OCI-LY7 (cell line): ENCODE measurements at regions of chr9 and their contacts with region 1.

Region 1: GRCh38 chr9:131739980-131740648 is at the start of gene RAPGEF1:
- DNase-seq: peak; percentile 84
- H3K4me3 ChIP-seq: peak within 1 kb of the TSS; percentile 81
- H3K27ac ChIP-seq: peak within 1 kb of the TSS; percentile 100
- H3K4me1 ChIP-seq: peaks cover 70% of the 10 kb centered on the region
- CTCF ChIP-seq: peak; percentile 82
- total RNA-seq, gene RAPGEF1: 114 and 118 TPM in 2 replicates

Region 2: GRCh38 chr9:131277910-131278701 is 462.0 kb before region 1 on chr9:
- CTCF ChIA-PET with region 1: no interaction called
- POLR2A ChIA-PET with region 1: no interaction called
- intact Hi-C with region 1: loop called (anchors 5 kb)
- DNase-seq: peak; percentile 86
- H3K4me3 ChIP-seq: peak overlapping the region; percentile 90
- H3K27ac ChIP-seq: peak overlapping the region; percentile 54
- H3K4me1 ChIP-seq: peaks cover 17% of the 10 kb centered on the region
- CTCF ChIP-seq: no peak

Region 3: DNA sequence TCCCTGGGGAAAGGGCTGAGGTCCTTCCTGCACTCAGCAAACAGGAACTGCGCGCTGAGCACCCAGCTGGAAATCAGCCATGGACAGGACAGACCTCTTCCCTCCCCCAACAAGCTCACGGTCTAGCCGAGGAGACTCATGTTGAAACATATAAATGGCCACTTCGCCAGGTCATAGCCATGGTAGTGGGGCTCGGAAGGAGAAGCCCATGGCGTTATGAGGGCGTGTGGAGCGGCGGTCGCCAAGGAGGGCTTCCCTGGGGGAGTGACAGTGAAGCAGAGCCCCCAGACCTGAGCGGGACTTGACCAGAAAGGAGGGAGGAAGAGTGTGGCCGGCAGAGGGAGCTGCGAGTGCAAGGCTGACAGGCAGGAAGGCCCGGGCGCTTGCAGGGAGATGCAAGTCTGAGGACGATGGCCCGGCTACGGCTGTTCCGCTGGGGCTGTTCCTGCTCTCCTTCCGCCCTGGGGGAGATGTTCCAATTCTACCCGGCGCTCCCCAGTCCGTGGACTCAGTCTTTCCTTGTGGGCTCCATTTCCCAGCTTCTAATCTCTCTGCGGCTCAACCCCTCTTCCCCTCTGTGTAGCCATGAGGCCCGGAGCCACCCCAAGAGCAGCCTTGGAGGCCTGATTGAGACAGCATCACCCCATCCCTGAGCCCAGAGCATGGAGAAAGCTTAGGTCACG is 390.1 kb before region 1 on chr9:
- CTCF ChIA-PET with region 1: no interaction called
- POLR2A ChIA-PET with region 1: no interaction called
- intact Hi-C with region 1: loop called (anchors 2 kb)
- DNase-seq: peak; percentile 87
- H3K4me3 ChIP-seq: no peak overlapping the region
- H3K27ac ChIP-seq: no peak overlapping the region
- H3K4me1 ChIP-seq: peaks cover 8% of the 10 kb centered on the region
- CTCF ChIP-seq: peak; percentile 85

Region 4: DNA sequence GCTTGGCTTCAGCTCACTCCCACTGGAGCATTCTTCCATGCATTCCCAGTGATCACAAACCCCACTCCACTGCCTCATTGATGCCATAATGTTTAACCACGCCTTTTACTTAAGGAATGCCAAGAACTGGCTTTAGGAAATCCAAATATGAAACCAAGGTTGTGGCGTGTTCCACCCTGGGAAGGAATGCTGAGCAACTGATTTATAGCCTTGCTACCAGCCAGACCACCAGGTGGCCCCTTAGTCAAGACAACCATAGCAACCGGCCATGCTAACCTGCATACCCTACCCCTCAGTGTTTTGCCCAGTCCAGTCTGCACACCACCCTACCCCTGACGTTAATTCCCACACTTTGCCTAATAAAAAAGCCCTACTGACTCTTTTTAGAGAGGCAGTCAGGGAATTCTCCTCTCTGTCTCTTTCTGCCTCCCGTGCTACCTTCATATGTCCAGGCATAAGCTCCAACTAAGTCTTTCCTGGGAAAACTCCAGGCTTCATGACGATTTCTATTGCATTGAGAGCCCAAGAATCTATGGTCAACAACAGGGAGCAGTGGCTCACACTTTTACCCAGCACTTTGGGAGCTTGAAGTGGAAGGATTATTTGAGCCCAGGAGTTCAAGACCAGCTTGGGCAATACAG is 373.2 kb before region 1 on chr9:
- CTCF ChIA-PET with region 1: no interaction called
- POLR2A ChIA-PET with region 1: no interaction called
- intact Hi-C with region 1: loop called (anchors 5 kb)
- DNase-seq: peak; percentile 68
- H3K4me3 ChIP-seq: no peak overlapping the region
- H3K27ac ChIP-seq: no peak overlapping the region
- H3K4me1 ChIP-seq: peaks cover 3% of the 10 kb centered on the region
- CTCF ChIP-seq: peak; percentile 77

Region 5: GRCh38 chr9:131590908-131591844 is 148.9 kb before region 1 on chr9:
- CTCF ChIA-PET with region 1: no interaction called
- POLR2A ChIA-PET with region 1: no interaction called
- intact Hi-C with region 1: loop called (anchors 2 kb)
- DNase-seq: peak; percentile 81
- H3K4me3 ChIP-seq: no peak overlapping the region
- H3K27ac ChIP-seq: no peak overlapping the region
- H3K4me1 ChIP-seq: no peaks in the 10 kb centered on the region
- CTCF ChIP-seq: peak; percentile 82

Region 6: DNA sequence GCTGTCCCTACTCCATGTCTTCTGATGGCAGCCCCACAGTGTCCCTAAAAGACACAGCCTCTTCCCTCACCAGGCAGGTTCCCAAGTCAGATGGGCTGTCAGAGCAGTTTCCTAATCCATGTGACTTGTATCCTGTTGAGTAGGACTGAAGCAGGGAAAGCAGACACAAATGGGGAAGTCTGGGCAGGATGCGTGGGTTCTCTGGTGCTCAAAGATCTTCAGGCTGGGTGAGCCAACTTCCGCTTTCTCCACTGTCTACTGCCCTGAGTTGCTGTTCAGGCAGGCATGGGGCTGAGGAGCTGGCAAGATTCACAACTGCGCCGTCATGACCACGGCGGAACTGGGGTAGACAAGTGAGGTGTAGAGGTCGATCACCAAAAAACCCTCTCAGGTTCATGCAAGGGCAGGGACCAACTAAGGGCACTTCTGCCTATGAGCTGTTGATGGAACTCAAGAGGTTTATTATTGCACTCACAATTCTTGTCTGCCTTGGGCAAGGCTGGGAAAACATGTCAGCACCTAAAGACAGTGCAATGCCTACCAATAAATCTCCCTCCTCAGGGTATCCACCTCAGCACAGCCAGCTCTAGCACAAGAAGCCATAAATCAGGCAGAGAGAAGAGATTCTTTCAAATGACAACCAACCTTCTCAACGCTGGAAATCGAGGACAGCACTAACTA is 83.6 kb before region 1 on chr9:
- CTCF ChIA-PET with region 1: interaction called, 3 read pairs
- POLR2A ChIA-PET with region 1: interaction called, 7 read pairs
- intact Hi-C with region 1: loop called (anchors 1 kb)
- DNase-seq: peak; percentile 93
- H3K4me3 ChIP-seq: peak overlapping the region; percentile 51
- H3K27ac ChIP-seq: peak overlapping the region; percentile 95
- H3K4me1 ChIP-seq: peaks cover 100% of the 10 kb centered on the region
- CTCF ChIP-seq: no peak

Region 7: GRCh38 chr9:131727184-131727759 is 12.8 kb before region 1 on chr9:
- CTCF ChIA-PET with region 1: interaction called, 7 read pairs
- POLR2A ChIA-PET with region 1: interaction called, 20 read pairs
- intact Hi-C with region 1: loop called (anchors 2 kb)
- DNase-seq: no peak
- H3K4me3 ChIP-seq: peak overlapping the region; percentile 62
- H3K27ac ChIP-seq: peak overlapping the region; percentile 100
- H3K4me1 ChIP-seq: peaks cover 99% of the 10 kb centered on the region
- CTCF ChIP-seq: no peak

Region 8: GRCh38 chr9:131854334-131854733 is 114.2 kb after region 1 on chr9:
- CTCF ChIA-PET with region 1: no interaction called
- POLR2A ChIA-PET with region 1: no interaction called
- intact Hi-C with region 1: no loop called
- DNase-seq: peak; percentile 4
- H3K4me3 ChIP-seq: no peak overlapping the region
- H3K27ac ChIP-seq: no peak overlapping the region
- H3K4me1 ChIP-seq: no peaks in the 10 kb centered on the region
- CTCF ChIP-seq: no peak

Region 9: GRCh38 chr9:131915181-131915580 is 175.1 kb after region 1 on chr9:
- CTCF ChIA-PET with region 1: no interaction called
- POLR2A ChIA-PET with region 1: no interaction called
- intact Hi-C with region 1: no loop called
- DNase-seq: no peak
- H3K4me3 ChIP-seq: no peak overlapping the region
- H3K27ac ChIP-seq: no peak overlapping the region
- H3K4me1 ChIP-seq: no peaks in the 10 kb centered on the region
- CTCF ChIP-seq: no peak

Region 10: GRCh38 chr9:132597073-132597775 is 857.1 kb after region 1 on chr9:
- CTCF ChIA-PET with region 1: no interaction called
- POLR2A ChIA-PET with region 1: no interaction called
- intact Hi-C with region 1: no loop called
- DNase-seq: no peak
- H3K4me3 ChIP-seq: no peak overlapping the region
- H3K27ac ChIP-seq: no peak overlapping the region
- H3K4me1 ChIP-seq: no peaks in the 10 kb centered on the region
- CTCF ChIP-seq: no peak